ENCODE measurements at regions of chr17 and their contacts with region 1.

Region 1: DNA sequence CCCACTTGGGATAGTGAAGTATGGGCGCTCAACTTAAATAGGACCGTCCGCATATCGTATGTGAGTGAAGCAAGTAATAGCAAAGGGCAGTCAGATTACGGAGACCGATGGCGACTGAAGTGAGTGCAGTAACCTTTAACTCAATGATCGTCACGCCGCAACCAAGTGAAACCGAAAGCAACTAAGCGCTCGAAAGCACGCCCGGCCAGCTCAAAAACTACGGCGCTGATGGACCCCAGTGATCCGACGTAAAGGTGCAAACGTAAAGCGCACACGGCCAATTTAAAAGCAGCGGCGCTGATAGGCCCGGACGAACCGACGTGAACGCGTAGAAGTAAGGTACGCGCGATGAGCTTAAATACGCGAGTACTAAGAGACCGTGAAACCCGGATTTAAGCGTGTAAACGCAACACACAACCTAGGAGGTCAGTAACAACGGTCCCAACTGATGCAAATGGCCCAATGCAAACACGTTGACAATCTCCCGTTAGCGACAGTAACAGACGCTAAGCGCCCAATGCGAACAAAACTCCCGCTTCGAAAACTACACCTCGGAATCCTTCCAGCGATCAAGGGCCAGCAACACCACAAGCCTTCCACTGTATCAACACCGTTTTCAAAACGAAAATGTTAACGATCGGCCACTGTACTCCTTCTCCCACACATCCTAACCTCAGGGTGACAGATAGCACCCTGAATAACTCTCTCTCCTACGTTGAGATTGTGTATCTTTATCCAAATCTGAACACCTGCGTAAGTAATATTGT is 37.9 kb upstream of the ARL4D start:
- DNase-seq: peak; percentile 97
- H3K4me3 ChIP-seq: peak overlapping the region; percentile 49
- H3K27ac ChIP-seq: peak overlapping the region; percentile 98
- H3K4me1 ChIP-seq: peaks cover 5% of the 10 kb centered on the region
- H3K27me3 ChIP-seq: no peaks in the 10 kb centered on the region
- CTCF ChIP-seq: no peak

Region 2: DNA sequence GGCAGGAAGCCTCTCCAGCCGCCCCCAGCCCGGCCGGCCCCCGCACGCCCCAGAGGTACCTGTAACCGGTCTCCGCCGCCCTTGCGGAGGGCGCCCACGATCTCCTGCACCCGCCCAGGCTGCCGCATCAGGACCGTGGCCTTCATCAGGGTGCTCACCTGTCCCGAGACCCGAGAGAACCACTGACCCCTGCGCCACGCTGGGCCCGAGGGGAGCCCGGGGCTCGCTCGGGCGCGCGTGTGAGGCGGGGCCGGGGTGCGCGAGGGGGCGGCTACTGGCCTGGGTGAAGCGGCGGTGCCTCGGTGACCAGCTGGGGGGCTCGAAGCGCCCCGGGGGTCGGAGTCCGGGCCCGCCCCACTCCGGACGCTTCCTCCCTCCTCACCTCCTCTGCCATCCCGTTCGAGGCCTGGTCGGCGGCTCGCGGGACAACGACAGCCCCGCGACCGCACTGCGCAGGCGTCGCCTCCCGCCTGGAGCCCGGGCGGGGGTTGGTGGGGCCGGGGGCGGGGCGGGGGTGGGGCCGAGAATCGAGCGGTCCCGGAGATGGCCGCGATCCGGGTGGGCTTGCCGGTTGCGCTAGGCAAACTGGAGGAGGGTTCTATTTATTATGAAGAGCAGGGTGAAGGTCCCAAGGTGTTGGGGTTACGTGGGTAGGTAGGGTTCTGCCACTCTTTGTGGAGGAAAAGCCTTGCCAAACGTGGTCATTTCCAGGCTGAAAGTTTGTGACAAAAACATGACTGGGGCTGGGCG is 1524.9 kb before region 1 on chr17 and contains the start of gene NT5C3B:
- CTCF ChIA-PET with region 1: no interaction called
- POLR2A ChIA-PET with region 1: no interaction called
- intact Hi-C with region 1: no loop called
- DNase-seq: peak; percentile 55
- H3K4me3 ChIP-seq: peak within 1 kb of the TSS; percentile 74
- H3K27ac ChIP-seq: peak within 1 kb of the TSS; percentile 71
- H3K4me1 ChIP-seq: no peaks in the 10 kb centered on the region
- H3K27me3 ChIP-seq: no peaks in the 10 kb centered on the region
- CTCF ChIP-seq: no peak
- total RNA-seq, gene NT5C3B: 46.7 and 50.7 TPM in 2 replicates

Region 3: GRCh38 chr17:42918902-42919521 is 441.9 kb before region 1 on chr17:
- CTCF ChIA-PET with region 1: no interaction called
- POLR2A ChIA-PET with region 1: no interaction called
- intact Hi-C with region 1: no loop called
- DNase-seq: no peak
- H3K4me3 ChIP-seq: no peak overlapping the region
- H3K27ac ChIP-seq: no peak overlapping the region
- H3K4me1 ChIP-seq: no peaks in the 10 kb centered on the region
- H3K27me3 ChIP-seq: no peaks in the 10 kb centered on the region
- CTCF ChIP-seq: no peak

Region 4: DNA sequence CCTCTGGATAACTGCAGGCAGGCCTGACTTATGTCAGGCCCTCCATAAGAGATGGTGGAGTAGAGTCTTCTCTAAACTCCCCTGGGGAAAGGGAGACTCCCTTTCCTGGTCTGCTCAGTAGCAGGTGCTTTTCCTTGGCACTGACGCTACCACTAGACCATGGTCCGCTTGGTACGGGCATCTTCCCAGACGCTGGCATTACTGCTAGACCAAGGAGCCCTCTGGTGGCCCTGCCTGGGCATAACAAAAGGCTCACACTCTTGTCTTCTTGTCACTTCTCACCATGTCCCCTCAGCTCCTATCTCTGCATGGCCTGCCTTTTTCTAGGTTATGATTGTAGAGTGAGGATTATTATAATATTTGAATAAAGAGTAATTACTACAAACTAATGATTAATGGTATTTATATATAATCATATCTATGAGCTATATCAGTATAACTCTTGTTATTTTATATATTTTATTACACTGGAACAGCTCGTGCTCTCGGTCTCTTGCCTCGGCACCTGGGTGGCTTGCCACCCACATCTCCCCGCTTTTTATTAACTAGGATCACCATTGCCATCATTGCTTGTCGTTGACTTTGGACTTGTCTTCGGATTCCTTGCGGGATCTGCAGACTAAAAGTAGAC is 21.9 kb before region 1 on chr17:
- CTCF ChIA-PET with region 1: no interaction called
- POLR2A ChIA-PET with region 1: no interaction called
- intact Hi-C with region 1: loop called (anchors 2 kb)
- DNase-seq: peak; percentile 54
- H3K4me3 ChIP-seq: no peak overlapping the region
- H3K27ac ChIP-seq: no peak overlapping the region
- H3K4me1 ChIP-seq: no peaks in the 10 kb centered on the region
- H3K27me3 ChIP-seq: no peaks in the 10 kb centered on the region
- CTCF ChIP-seq: peak; percentile 58

Region 5: DNA sequence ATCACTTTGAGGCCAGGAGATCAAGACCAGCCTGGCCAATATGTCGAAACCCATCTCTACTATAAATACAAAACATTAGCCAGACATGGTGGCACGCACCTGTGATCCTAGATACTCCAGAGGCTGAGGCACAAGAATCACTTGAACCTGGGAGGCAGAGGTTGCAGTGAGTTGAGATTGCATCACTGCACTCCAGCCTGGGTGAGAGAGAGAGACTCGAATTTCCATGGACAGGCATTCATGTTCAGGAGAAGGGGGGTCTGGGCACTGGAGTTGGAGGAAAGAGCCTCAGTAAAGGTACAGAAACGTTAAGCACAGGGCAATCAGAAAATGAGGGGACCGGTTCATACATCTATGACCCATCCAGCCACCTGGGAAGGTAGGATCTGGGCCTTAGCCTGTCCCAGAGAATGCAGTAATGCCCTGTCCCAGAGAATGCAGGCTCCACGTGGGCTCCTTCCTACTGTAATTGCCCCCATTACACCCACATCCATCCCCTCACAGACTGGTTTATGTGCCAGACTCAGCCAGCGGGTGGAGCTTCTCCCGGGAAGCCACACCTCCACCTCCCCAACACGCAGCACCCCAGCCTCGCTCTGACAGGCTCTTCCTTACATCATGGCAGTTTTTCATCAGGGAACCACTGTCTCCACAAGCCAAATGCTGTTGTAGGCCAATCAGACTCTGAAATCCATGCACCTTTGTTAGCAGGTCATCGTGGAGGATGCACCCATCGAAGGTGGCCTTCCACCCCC is 16.3 kb after region 1 on chr17:
- CTCF ChIA-PET with region 1: no interaction called
- POLR2A ChIA-PET with region 1: no interaction called
- intact Hi-C with region 1: no loop called
- DNase-seq: no peak
- H3K4me3 ChIP-seq: no peak overlapping the region
- H3K27ac ChIP-seq: no peak overlapping the region
- H3K4me1 ChIP-seq: no peaks in the 10 kb centered on the region
- H3K27me3 ChIP-seq: no peaks in the 10 kb centered on the region
- CTCF ChIP-seq: no peak

Measured in A673 (cell line).